ENCODE measurements at regions of chr20 and their contacts with region 1.

Region 1: DNA sequence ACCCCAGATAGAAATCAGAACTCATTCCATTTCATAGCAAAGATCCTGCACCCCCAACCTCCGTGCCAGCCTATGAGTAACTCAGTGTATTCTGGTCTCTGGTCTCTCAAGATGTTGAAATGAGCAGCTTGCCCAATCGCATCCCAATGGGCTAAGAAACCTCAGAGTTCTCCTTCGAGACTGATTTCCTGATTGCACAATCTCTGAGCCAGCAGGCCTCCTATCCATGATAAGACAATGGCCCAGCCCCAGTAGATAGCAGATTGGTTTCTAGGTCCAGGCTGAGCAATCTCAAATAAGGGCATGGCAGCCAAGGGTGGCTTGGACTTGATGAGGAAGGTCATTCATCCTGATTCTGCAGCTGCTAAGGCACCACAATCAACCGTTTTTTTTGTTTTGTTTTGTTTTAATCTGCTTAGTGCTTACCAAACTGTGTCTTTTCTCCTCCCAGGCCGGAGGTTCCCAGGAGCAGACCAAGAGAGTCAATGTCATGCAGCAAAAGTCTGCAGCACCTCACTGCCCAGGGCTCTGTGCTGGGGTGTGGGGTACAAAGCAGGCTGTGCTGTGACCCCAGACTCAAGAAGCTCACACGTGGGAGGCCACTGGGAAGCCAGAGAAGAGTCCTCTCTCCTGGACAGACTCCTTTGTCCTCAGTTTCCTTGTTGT is 125.1 kb upstream of the NXT1 start:
- DNase-seq: no peak
- ATAC-seq: peak; percentile 80
- H3K4me3 ChIP-seq: no peak overlapping the region
- H3K4me3 Mint-ChIP-seq: no peak overlapping the region
- H3K27ac ChIP-seq: no peak overlapping the region
- H3K27ac Mint-ChIP-seq: no peak overlapping the region
- H3K4me1 ChIP-seq: no peaks in the 10 kb centered on the region
- H3K4me1 Mint-ChIP-seq: no peaks in the 10 kb centered on the region
- H3K27me3 ChIP-seq: no peaks in the 10 kb centered on the region
- H3K27me3 Mint-ChIP-seq: peaks cover 0 to 40% (median 9%) of the 10 kb centered on the region in 5 donors

Region 2: GRCh38 chr20:23205611-23206041 is 19.9 kb before region 1 on chr20:
- CTCF ChIA-PET with region 1: no interaction called
- POLR2A ChIA-PET with region 1: no interaction called
- intact Hi-C with region 1: loop called in 1 of 2 experiments (anchors 1 kb)
- DNase-seq: no peak
- ATAC-seq: no peak
- H3K4me3 ChIP-seq: no peak overlapping the region
- H3K4me3 Mint-ChIP-seq: no peak overlapping the region
- H3K27ac ChIP-seq: no peak overlapping the region
- H3K27ac Mint-ChIP-seq: no peak overlapping the region
- H3K4me1 ChIP-seq: no peaks in the 10 kb centered on the region
- H3K4me1 Mint-ChIP-seq: no peaks in the 10 kb centered on the region
- H3K27me3 ChIP-seq: no peaks in the 10 kb centered on the region
- H3K27me3 Mint-ChIP-seq: peaks cover 17 to 30% (median 22%) of the 10 kb centered on the region in 5 donors